ENCODE measurements at regions of chr9 and their contacts with region 1.

Region 1: DNA sequence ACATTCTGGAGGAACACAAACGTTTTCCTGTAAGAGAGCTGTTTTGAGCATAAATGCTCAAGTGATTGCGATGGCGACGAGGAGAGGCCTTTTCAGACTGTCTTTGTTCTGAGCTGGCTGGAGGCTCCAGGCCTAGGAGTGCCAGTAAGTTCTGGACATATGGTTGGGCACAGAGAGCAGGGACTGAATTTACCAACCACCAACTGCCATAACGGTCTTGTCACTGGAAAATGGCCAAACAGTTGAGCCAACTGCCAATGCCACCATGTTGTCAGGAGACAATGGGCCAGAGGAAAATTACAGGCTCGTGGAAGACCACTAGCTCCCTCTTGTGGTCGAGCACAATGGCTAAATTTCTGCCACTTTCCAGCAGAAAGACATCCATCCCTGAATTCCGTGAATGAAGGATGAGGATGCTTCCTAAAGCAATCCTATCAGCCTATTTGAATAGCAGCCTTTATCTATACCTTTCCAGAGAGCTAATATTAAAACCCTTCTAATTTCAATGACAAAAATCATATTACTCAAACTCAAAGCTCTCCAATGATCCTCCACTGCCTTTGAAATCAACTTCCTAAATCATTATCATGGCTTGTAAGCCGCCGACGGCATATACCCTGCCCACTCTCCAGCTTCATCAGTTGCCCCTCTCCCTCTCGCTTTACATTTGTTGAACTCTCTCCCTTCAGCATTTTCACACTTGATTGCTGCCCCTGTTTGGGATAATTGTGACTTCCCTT is 66.9 kb upstream of the GLIS3 start:
- DNase-seq: peak; percentile 70
- H3K4me3 ChIP-seq: no peak overlapping the region
- H3K27ac ChIP-seq: no peak overlapping the region
- H3K4me1 ChIP-seq: peaks cover 14% of the 10 kb centered on the region
- H3K27me3 ChIP-seq: no peaks in the 10 kb centered on the region

Region 2: DNA sequence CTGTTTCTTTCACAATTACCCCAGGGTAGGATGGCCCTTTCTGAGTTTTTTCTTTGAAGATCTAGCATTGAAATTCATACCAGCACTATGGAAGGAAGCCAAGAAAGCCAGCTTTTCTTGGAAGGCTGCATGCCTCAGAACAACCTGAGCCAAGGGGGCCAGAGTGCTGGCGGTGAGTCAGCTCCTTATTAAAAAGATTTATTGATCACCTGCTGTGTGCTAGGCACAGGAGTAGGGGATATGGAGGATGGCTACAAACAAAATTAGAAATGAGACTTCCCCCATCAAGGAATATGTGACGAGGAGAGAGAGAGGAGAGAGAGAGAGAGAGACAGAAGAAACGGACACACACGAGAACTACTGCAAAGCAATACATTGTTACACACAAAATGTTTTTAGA is 1338.2 kb before region 1 on chr9:
- in situ Hi-C with region 1: loop called (anchors 25 kb)
- DNase-seq: no peak
- H3K4me3 ChIP-seq: no peak overlapping the region
- H3K27ac ChIP-seq: no peak overlapping the region
- H3K4me1 ChIP-seq: no peaks in the 10 kb centered on the region
- H3K27me3 ChIP-seq: no peaks in the 10 kb centered on the region; the same call in 1 of the 2 replicates

Region 3: GRCh38 chr9:3240656-3241268 is 1126.0 kb before region 1 on chr9:
- in situ Hi-C with region 1: loop called (anchors 25 kb)
- DNase-seq: peak; percentile 68
- H3K4me3 ChIP-seq: no peak overlapping the region
- H3K27ac ChIP-seq: no peak overlapping the region
- H3K4me1 ChIP-seq: peaks cover 11% of the 10 kb centered on the region; the same call in 1 of the 2 replicates
- H3K27me3 ChIP-seq: no peaks in the 10 kb centered on the region

Region 4: DNA sequence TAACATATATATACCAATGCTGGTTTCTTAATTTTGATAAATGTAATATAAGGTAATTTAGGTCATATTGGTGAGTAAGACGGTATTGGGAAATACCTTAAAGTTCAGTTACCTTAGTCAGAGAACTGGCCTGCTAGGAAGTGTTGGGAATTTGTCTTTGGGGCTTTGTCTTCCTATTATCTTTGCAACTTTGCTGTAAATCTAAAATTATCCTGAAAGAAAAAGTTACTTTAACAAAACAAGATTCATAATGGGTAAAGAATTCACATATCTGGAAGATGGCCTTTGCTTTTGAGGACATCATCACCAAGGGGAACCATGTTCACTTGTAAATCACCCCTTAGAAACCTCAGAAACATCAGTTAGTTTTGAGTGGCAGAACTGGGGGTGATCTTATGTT is 108.4 kb before region 1 on chr9:
- in situ Hi-C with region 1: no loop called
- DNase-seq: peak; percentile 85
- H3K4me3 ChIP-seq: peak overlapping the region; percentile 54
- H3K27ac ChIP-seq: peak overlapping the region; percentile 82
- H3K4me1 ChIP-seq: peaks cover 36% of the 10 kb centered on the region
- H3K27me3 ChIP-seq: no peaks in the 10 kb centered on the region

Measured in GM23248 (cell line).